AG04449 (cell line): ENCODE measurements at regions of chr6 and their contacts with region 1.

Region 1: DNA sequence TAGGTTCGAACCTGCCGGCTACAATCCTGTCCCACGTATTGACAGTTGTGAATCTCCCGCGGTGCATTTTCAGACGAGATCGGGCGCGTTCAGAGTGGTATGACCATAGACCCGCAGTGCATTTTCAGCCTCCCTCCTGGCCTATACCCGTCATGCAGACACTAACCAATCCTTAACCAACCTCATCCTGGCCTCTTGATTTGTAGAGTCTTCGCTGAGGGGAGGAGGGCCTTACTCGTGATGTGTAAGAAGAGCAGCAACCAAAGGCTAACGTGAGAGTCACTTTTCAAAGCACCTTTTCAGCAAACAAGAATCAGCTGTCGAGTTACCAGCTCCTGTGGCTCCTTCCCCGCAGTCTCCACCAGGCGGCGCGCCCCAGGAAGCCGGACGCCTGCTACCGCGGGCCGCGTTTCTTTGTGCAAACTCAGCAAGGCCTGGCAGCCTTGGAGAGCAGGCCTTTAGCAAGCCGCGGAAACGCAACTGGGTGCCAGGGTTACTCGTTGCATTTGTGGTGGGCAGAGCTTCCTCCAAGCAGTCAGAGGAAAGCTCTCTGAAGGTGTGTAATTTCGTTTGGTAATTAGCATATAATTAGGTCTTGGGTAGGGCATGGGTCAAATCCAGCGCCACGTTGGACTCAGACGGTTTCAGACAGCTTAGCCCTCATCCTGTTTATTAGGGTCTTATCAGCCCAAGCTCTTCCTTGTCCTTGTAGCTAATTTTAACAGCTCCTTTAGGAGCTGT is 139.8 kb downstream of the OR2B2 start:
- DNase-seq: peak; percentile 37
- H3K4me3 ChIP-seq: peak overlapping the region; percentile 36
- CTCF ChIP-seq: peak; percentile 98

Region 2: GRCh38 chr6:27157459-27158315 is 614.7 kb before region 1 on chr6:
- CTCF ChIA-PET with region 1: interaction called, 23 read pairs
- POLR2A ChIA-PET with region 1: no interaction called
- DNase-seq: peak; percentile 40
- H3K4me3 ChIP-seq: peak overlapping the region; percentile 59
- CTCF ChIP-seq: peak; percentile 50

Region 3: DNA sequence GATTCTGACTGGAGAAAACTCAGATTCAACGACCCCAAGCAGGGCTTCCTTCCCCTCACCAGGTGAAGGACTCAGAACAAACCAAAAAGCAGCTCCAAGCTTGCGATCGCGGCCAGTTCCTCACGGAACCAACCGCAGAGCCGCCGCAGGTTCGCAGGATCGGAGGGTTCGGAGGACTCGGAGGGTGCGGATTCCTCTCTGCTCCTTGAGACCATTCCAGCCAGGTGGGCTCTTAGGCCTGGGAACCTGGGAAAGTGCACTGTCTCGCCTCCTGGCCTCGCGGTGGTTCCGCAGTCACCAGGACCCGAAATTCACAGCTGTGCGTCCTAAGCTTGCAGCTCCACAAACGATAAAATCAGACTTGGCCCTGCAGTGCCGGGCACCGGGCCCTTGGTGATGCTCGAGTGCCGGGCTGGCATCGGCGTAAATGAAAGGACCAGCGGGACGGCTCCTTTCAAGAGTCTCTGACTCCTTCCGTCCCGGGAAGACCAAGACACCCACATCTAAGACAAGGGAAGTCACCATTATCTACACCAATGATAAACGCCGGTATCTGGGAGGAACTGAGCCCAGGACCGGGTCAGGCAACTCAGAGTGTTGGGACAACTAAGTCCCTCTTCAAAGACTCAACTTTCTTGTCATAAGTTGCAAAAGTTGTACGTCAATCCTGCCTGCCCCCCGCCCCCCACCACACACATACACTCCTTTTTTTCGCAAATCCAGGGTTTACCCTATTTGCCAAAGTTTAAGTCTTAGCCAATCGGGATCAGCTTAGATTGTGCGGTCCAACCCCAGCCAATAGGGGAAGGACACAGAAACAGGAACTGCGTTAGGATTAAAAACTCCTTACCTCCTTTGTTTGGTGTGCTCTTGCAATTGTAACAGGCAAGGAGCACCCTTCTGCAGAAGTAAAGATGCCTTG is 594.7 kb before region 1 on chr6:
- CTCF ChIA-PET with region 1: interaction called, 14 read pairs
- POLR2A ChIA-PET with region 1: no interaction called
- DNase-seq: peak; percentile 73
- H3K4me3 ChIP-seq: peak overlapping the region; percentile 100
- CTCF ChIP-seq: peak; percentile 42

Region 4: GRCh38 chr6:27726620-27727023 is 45.8 kb before region 1 on chr6:
- CTCF ChIA-PET with region 1: no interaction called
- POLR2A ChIA-PET with region 1: no interaction called
- DNase-seq: no peak
- H3K4me3 ChIP-seq: no peak overlapping the region
- CTCF ChIP-seq: no peak

Region 5: DNA sequence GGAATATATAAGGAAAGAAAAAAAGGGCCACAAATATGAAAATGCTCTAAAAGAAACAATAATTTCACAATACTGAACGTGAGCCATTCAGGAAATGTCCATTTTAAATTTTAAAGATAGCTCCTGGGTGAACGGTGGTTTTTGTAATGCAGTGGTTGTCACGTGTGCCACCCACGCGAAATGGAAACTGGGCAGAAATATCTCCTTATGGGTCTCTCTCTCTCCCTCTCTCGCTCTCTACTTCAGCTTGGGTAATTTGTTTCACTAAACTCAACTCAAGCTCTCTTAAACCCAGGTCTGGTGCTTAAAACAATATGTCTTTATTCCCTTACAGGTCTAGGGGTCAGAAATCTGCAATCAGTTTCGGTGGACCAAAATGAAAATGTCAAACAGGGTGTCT is 11.0 kb before region 1 on chr6:
- CTCF ChIA-PET with region 1: interaction called, 78 read pairs
- POLR2A ChIA-PET with region 1: no interaction called
- DNase-seq: no peak
- H3K4me3 ChIP-seq: no peak overlapping the region
- CTCF ChIP-seq: no peak

Region 6: GRCh38 chr6:27785294-27785693 is 12.9 kb after region 1 on chr6:
- CTCF ChIA-PET with region 1: interaction called, 42 read pairs
- POLR2A ChIA-PET with region 1: no interaction called
- DNase-seq: no peak
- H3K4me3 ChIP-seq: no peak overlapping the region
- CTCF ChIP-seq: no peak

Region 7: GRCh38 chr6:27830212-27830599 is 57.8 kb after region 1 on chr6:
- CTCF ChIA-PET with region 1: no interaction called
- POLR2A ChIA-PET with region 1: no interaction called
- DNase-seq: no peak
- H3K4me3 ChIP-seq: peak overlapping the region; percentile 67
- CTCF ChIP-seq: no peak